T-cell (primary cell): ENCODE measurements at regions of chr2 and their contacts with region 1.

Region 1: GRCh38 chr2:30165050-30165520 is 18.3 kb downstream of the YPEL5 start:
- DNase-seq: peak in 34 of 35 experiments; percentile 6 to 89 (median 66)
- ATAC-seq: peak; percentile 43 to 96 (median 92)
- H3K4me3 ChIP-seq: no peak overlapping the region
- H3K4me3 Mint-ChIP-seq: peak overlapping the region in 1 of 3 donors; percentile 34
- H3K27ac ChIP-seq: no peak overlapping the region
- H3K27ac Mint-ChIP-seq: no peak overlapping the region
- H3K4me1 ChIP-seq: peaks cover 0 to 3% of the 10 kb centered on the region in 2 experiments
- H3K4me1 Mint-ChIP-seq: peaks cover 8 to 33% (median 11%) of the 10 kb centered on the region in 3 donors
- H3K27me3 ChIP-seq: no peaks in the 10 kb centered on the region
- H3K27me3 Mint-ChIP-seq: no peaks in the 10 kb centered on the region

Region 2: DNA sequence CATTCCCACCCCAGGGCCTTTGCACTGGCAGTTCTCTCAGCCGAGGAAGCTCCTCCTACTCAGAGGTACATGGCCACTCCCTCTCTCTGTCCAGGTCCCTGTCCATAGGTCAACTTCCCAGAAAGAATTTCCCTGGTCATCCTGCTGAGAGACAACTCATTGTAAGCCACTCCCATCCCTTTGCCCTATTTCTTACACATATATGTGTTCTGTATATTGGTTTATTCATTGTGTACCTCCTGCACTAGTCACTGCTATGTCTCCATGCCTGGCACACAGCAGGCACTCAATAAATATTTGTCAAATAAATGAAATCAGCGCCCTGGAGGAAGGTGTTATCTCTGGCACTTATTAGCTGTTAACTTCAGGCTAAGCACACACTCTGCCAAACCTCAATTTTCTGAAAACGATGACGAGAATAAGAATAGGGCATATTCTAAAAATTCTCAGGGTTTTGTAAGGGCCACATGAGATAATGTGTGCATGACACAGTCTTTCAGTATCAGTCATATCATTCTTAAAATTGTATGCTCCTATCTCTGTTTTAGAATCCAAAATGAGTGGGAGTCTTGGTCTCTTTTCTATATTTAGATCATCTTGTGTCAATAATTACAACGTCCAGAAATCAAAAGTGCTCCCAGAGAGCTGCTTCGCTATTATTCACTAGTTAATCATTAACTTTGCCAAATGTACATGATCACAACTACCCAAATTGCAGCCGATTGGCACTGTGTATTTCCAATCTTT is 441.7 kb before region 1 on chr2:
- CTCF ChIA-PET with region 1: no interaction called
- POLR2A ChIA-PET with region 1: no interaction called
- DNase-seq: no peak
- ATAC-seq: no peak
- H3K4me3 ChIP-seq: no peak overlapping the region
- H3K4me3 Mint-ChIP-seq: no peak overlapping the region
- H3K27ac ChIP-seq: no peak overlapping the region
- H3K27ac Mint-ChIP-seq: no peak overlapping the region
- H3K4me1 ChIP-seq: no peaks in the 10 kb centered on the region
- H3K4me1 Mint-ChIP-seq: no peaks in the 10 kb centered on the region
- H3K27me3 ChIP-seq: no peaks in the 10 kb centered on the region
- H3K27me3 Mint-ChIP-seq: peaks cover 9 to 16% of the 10 kb centered on the region in 2 donors

Region 3: GRCh38 chr2:30048636-30049180 is 116.4 kb before region 1 on chr2:
- CTCF ChIA-PET with region 1: no interaction called
- POLR2A ChIA-PET with region 1: no interaction called
- DNase-seq: no peak
- ATAC-seq: no peak
- H3K4me3 ChIP-seq: no peak overlapping the region
- H3K4me3 Mint-ChIP-seq: no peak overlapping the region
- H3K27ac ChIP-seq: no peak overlapping the region
- H3K27ac Mint-ChIP-seq: no peak overlapping the region
- H3K4me1 ChIP-seq: no peaks in the 10 kb centered on the region
- H3K4me1 Mint-ChIP-seq: no peaks in the 10 kb centered on the region
- H3K27me3 ChIP-seq: peaks cover 2 to 4% of the 10 kb centered on the region in 2 experiments
- H3K27me3 Mint-ChIP-seq: peaks cover 25 to 41% of the 10 kb centered on the region in 2 donors

Region 4: GRCh38 chr2:30139131-30139870 is 25.8 kb before region 1 on chr2:
- CTCF ChIA-PET with region 1: interaction called, 3 to 97 read pairs
- POLR2A ChIA-PET with region 1: interaction called, 5 to 7 read pairs
- DNase-seq: peak in 26 of 35 experiments; percentile 6 to 65 (median 35)
- ATAC-seq: peak; percentile 48 to 85 (median 50)
- H3K4me3 ChIP-seq: no peak overlapping the region
- H3K4me3 Mint-ChIP-seq: no peak overlapping the region
- H3K27ac ChIP-seq: no peak overlapping the region
- H3K27ac Mint-ChIP-seq: peak overlapping the region in 1 of 2 donors; percentile 68
- H3K4me1 ChIP-seq: peaks cover 0 to 7% of the 10 kb centered on the region in 2 experiments
- H3K4me1 Mint-ChIP-seq: peaks cover 19 to 21% (median 20%) of the 10 kb centered on the region in 3 donors
- H3K27me3 ChIP-seq: peaks cover 0 to 3% of the 10 kb centered on the region in 2 experiments
- H3K27me3 Mint-ChIP-seq: peaks cover 0 to 7% of the 10 kb centered on the region in 2 donors

Region 5: DNA sequence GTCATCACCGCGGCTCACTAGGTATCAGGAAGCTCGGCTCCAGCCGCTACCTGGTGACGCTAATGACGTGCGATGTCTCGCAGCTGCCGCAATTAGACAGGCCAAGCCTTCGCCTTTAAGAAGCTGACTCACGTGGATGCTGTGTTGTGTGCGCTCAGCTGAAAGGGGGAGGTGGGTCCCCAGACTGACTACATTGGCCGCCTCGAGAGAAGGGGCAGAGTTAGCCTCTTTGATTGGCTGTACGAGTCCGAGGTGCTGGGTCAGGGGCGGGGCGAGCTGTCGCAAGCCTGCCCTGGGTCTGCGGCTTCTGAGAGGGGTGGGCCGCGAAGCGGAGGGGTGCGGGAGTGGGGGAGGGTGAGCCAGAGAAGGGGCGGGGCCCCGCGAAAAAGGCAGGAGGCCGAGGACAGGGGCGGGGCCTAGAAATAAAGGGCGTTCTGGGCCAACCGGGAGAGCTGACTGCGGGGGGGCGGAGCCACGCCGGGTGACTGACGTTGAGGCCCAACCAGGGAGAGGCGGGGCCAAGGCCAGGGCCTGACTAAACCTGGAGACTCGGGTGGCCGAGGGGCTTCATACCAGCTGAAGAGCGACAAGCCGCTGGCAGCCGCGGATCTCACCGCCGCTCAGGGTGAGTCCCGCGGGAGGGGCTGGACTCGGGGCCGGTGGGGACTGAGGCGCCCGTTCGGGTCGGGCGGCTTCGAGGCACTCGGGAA is 18.5 kb before region 1 on chr2 and contains the start of gene YPEL5:
- CTCF ChIA-PET with region 1: interaction called, 5 to 97 read pairs
- POLR2A ChIA-PET with region 1: interaction called, 37 to 189 read pairs
- DNase-seq: peak; percentile 97 to 100 (median 100)
- ATAC-seq: peak; percentile 85 to 90 (median 88)
- H3K4me3 ChIP-seq: peak within 1 kb of the TSS; percentile 67 to 77
- H3K4me3 Mint-ChIP-seq: peak within 1 kb of the TSS; percentile 83 to 94 (median 84)
- H3K27ac ChIP-seq: peak within 1 kb of the TSS; percentile 99
- H3K27ac Mint-ChIP-seq: peak within 1 kb of the TSS; percentile 99 to 100
- H3K4me1 ChIP-seq: peaks cover 22 to 36% of the 10 kb centered on the region in 2 experiments
- H3K4me1 Mint-ChIP-seq: peaks cover 56 to 61% (median 58%) of the 10 kb centered on the region in 3 donors
- H3K27me3 ChIP-seq: no peaks in the 10 kb centered on the region
- H3K27me3 Mint-ChIP-seq: no peaks in the 10 kb centered on the region
- total RNA-seq, gene YPEL5: 73.0 to 962 (median 77.3) TPM

Region 6: DNA sequence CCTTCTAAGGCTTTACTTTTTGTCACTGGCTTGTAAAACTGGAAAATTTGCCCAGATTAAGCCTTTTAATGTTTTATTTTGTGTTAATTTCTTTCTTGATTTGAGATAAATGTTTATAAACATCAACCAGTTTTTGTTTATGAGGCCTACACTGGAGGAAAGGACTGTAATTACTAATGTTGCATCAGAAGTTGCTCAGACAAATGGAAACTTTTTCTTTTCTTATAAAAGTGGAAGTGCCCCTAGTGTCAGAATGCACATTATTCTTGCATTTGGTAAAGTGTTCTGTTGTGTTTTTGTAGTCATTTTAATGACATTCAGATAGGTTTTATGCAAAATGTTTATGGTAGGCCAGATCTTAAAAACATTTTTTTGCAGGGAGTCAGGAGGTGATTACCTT is 307.2 kb after region 1 on chr2:
- CTCF ChIA-PET with region 1: interaction called, 3 to 14 read pairs
- POLR2A ChIA-PET with region 1: no interaction called
- DNase-seq: no peak
- ATAC-seq: no peak
- H3K4me3 ChIP-seq: no peak overlapping the region
- H3K4me3 Mint-ChIP-seq: no peak overlapping the region
- H3K27ac ChIP-seq: no peak overlapping the region
- H3K27ac Mint-ChIP-seq: no peak overlapping the region
- H3K4me1 ChIP-seq: peaks cover 0 to 12% of the 10 kb centered on the region in 2 experiments
- H3K4me1 Mint-ChIP-seq: peaks cover 39 to 62% (median 45%) of the 10 kb centered on the region in 3 donors
- H3K27me3 ChIP-seq: no peaks in the 10 kb centered on the region
- H3K27me3 Mint-ChIP-seq: no peaks in the 10 kb centered on the region

Region 7: GRCh38 chr2:31027549-31027948 is 862.5 kb after region 1 on chr2:
- CTCF ChIA-PET with region 1: no interaction called
- POLR2A ChIA-PET with region 1: no interaction called
- DNase-seq: no peak
- ATAC-seq: no peak
- H3K4me3 ChIP-seq: no peak overlapping the region
- H3K4me3 Mint-ChIP-seq: no peak overlapping the region
- H3K27ac ChIP-seq: no peak overlapping the region
- H3K27ac Mint-ChIP-seq: no peak overlapping the region
- H3K4me1 ChIP-seq: no peaks in the 10 kb centered on the region
- H3K4me1 Mint-ChIP-seq: no peaks in the 10 kb centered on the region
- H3K27me3 ChIP-seq: peaks cover 0 to 5% of the 10 kb centered on the region in 2 experiments
- H3K27me3 Mint-ChIP-seq: peaks cover 0 to 8% of the 10 kb centered on the region in 2 donors